Mammary epithelial cell (primary cell): ENCODE measurements at regions of chr2 and their contacts with region 1.

Region 1: DNA sequence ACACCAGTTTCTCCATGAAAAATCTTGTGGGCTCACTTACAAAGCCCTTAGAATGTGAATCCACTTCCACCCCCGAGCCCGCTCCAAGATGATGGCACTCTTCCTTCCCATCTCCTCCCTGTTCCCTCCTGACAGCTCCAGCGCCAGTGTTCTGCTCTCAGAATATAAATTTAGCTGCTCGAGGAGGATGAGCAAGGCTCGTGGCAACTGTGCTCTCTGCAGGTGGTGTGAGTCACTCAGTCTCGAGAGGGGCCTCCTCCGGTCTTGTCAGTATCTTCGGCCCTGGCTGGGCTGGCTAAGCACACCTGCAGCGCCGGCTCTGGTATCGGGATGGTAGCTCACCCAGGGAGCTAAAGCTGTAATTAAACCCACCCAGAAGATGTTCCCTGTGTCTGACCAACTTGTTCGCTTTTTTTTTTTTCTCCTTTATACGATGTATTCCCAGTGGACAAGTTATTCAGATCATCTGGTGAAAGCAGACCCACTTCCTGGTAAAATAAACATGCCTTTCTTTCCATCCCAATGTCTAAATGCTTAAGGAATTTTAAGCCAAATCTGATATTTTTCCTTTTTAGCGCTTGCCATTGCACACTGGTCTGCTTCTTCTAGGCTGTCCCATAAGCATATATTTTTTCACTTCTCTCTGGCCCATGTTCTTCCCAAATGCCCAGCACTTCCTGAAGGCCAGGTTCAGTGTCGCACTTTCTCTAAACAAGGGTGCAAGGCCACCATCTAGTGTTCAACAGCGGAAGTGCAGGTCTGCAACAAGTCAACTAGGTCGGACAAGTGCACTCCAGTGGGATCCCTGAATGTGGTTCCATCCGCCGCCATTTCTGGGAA is 31.4 kb upstream of the YPEL5 start:
- DNase-seq: peak; percentile 62
- H3K4me3 ChIP-seq: no peak overlapping the region
- H3K27ac ChIP-seq: no peak overlapping the region
- H3K4me1 ChIP-seq: peaks cover 31% of the 10 kb centered on the region
- H3K27me3 ChIP-seq: peaks cover 1% of the 10 kb centered on the region
- CTCF ChIP-seq: peak; percentile 97 to 99

Region 2: DNA sequence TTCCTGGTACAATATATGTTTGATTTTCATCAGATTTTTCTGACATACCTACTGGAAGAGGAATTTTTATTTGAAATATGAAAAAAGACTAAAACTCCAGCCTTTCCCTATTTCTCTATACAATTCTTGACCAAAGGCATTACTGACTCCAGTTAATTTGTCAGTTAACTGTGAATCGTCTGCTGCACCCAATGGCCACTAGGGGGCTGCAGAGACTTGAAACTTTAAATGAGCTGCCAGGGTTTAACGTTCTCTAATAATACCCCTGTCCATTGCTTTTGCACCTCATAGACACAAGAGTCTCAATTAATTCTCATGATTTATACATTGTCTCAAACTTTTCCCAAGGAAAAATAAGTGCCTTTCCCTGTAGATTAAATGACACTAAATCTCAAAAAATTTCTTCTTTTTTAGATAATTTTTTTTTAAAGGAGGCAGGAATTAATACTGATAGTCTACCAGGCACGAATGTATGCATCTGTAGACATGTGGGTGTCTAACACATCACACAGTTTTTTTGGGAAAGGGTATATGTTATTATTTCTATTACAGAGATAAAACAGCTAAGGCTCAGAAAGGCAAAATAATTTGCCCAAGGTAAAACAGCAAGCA is 192.1 kb before region 1 on chr2:
- CTCF ChIA-PET with region 1: no interaction called
- dilution Hi-C with region 1: no loop called
- in situ Hi-C with region 1: no loop called
- intact Hi-C with region 1: loop called (anchors 1 kb)
- DNase-seq: peak; percentile 39
- H3K4me3 ChIP-seq: no peak overlapping the region
- H3K27ac ChIP-seq: no peak overlapping the region
- H3K4me1 ChIP-seq: peaks cover 6% of the 10 kb centered on the region
- H3K27me3 ChIP-seq: peaks cover 25% of the 10 kb centered on the region
- CTCF ChIP-seq: peak; percentile 92 to 93

Region 3: DNA sequence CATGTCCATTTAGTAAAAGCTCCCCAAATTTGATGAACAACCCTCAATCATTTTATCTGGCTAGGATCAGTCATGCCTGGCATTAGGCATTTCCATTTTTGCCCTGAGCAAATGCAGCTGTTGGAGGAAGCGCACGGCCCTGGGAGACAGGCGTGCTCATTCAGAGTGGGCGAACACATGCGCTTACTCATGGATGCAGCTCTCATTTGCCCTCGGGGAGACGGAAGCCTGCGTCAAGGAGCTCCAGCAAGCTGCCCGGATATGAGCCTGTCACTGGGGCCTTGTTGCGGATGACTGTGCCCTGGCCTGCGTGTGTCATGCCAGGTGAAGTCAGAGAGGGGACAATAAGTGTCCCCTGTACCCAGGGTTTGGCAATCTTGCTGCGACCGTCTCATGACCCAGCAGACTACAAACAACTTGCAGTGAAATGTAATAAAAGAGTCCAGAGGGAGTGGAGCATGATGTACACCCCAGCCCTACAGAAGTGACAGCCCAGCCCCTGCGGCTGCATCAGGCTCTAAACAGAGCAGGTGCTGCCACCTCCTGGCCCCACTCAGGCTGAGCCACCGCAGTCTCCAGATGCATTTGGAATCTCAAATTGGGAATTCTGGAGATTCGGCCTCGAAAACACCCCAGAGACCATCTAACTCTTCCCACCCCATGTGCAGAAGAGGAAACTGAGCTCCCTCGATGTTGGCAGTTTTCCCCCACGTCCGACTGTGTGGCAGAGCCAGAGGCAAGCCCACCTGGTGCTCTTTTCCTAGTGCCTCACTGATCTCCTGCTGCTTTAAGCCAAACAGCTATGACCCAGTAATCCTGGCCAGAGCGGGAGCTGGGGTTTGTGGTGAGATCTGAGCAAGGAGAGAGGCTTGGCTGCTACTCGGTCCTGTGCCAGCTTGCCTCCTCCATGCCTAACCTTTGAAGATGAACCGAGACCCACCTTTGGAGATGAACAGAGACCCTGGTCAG is 89.0 kb before region 1 on chr2:
- CTCF ChIA-PET with region 1: no interaction called
- dilution Hi-C with region 1: loop called (anchors 5 kb)
- in situ Hi-C with region 1: no loop called
- intact Hi-C with region 1: no loop called
- DNase-seq: peak; percentile 95
- H3K4me3 ChIP-seq: no peak overlapping the region
- H3K27ac ChIP-seq: no peak overlapping the region
- H3K4me1 ChIP-seq: peaks cover 13% of the 10 kb centered on the region
- H3K27me3 ChIP-seq: no peaks in the 10 kb centered on the region
- CTCF ChIP-seq: peak; percentile 63 to 81

Region 4: GRCh38 chr2:30084915-30085314 is 30.4 kb before region 1 on chr2:
- CTCF ChIA-PET with region 1: no interaction called
- dilution Hi-C with region 1: no loop called
- in situ Hi-C with region 1: no loop called
- intact Hi-C with region 1: loop called (anchors 5 kb)
- DNase-seq: no peak
- H3K4me3 ChIP-seq: no peak overlapping the region
- H3K27ac ChIP-seq: no peak overlapping the region
- H3K4me1 ChIP-seq: no peaks in the 10 kb centered on the region
- H3K27me3 ChIP-seq: peaks cover 3% of the 10 kb centered on the region
- CTCF ChIP-seq: no peak